GM12878 (cell line): ENCODE measurements at regions of chr6 and their contacts with region 1.

Region 1: DNA sequence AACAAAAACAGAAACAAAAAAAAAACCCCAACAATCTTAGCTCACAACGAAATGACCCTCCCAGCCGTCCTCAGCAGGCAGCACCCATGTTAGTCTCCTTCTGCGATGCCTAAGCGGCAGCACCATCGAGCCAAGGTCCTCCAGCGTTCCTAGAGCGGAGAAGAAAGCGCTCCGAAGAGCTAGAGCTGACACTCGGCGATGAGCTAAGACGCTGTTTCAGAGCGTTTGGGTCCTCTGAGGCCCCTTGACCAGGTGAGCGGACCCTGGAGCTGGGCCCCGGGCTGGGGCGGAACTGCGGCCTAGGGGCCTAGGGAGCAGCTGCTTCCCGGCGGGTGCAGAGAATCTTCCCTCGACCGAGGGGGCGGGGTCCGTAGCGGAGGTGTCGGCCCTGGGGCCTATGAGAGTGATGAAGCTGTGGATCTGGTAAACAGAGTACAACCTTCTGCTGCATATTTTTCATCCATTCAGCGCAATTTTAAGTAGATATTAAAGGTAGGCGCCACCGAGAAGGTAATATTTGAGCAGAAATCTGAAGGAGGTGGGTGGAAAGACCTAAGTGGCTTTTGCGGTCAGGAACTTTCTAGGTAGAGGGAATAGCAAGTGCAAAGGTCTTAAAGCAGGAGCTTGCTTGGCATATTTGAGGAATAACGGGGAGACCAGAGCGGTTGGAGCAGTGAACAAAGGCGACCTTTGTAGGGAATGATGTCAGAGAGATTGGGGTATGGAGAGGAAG is at the start of gene ZSCAN26:
- DNase-seq: peak; percentile 70
- ATAC-seq: peak; percentile 98
- H3K4me3 ChIP-seq: peak within 1 kb of the TSS; percentile 96
- H3K27ac ChIP-seq: peak within 1 kb of the TSS; percentile 84
- H3K4me1 ChIP-seq: no peaks in the 10 kb centered on the region
- H3K27me3 ChIP-seq: no peaks in the 10 kb centered on the region
- CTCF ChIP-seq: no peak
- EP300 ChIP-seq: no peak
- POLR2A ChIP-seq: peak; percentile 82
- RAD21 ChIP-seq: 0 out of 2 replicates have a peak, but pooled peaks have one; percentile 4
- polyA plus RNA-seq, gene ZSCAN26: 4.6 to 5.4 TPM

Region 2: GRCh38 chr6:28218271-28219248 is 48.6 kb before region 1 on chr6:
- CTCF ChIA-PET with region 1: no interaction called
- POLR2A ChIA-PET with region 1: interaction called, 7 read pairs
- RAD21 ChIA-PET with region 1: interaction called, 4 read pairs
- SMC1A ChIA-PET with region 1: interaction called, 13 read pairs
- in situ Hi-C with region 1: no loop called
- intact Hi-C with region 1: no loop called
- DNase-seq: no peak
- ATAC-seq: peak; percentile 97
- H3K4me3 ChIP-seq: peak overlapping the region; percentile 83
- H3K27ac ChIP-seq: no peak overlapping the region
- H3K4me1 ChIP-seq: peaks cover 3% of the 10 kb centered on the region; the same call in 1 of the 2 replicates
- H3K27me3 ChIP-seq: no peaks in the 10 kb centered on the region; a peak in 1 of 4 replicates
- CTCF ChIP-seq: no peak
- EP300 ChIP-seq: no peak
- POLR2A ChIP-seq: peak; percentile 67
- RAD21 ChIP-seq: no peak

Region 3: DNA sequence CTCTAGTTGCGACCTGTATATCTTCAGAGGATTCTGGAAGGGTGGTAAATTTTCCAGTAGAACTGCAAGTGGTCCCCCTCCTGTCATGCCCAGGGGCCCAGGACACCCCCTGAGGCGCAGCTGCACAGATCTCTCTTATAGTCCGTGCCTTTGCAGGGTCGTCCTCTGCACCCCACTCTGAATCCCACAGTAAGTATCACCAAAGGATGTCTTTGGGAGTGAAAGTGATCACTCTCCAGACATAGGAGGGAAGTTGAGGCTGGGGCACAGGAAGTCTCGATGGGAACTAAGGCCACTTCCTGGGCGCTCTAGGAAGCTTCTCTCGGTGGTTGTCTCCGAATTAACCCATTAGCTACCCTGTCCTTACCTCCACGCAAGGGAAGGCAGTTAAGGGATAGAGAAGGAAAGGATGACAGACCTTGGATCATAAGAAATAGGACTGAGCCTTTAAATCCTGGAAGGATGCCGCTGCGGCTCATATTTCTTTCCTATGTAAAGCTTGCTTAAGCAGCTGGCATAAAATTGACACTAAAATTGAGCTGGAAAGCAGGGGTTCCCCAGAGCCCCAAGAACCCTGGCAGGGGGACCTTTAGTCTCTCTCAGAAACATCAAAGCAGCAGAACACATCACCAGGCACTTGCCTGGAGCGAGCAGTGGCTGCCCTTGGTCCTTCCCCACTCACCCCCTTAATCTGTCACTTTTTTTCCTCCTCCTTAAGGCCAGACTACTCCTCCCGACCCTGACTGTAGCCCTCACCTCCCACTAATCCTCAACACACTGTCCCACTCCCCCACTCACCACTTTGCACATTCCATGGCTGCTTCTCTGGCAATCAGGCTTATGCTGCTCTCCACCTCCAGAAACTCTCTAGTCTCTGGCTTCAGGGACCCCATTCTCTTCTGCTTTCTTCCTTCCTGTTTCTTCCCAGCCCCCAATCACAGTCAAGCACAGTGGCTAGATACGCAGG is 14.8 kb before region 1 on chr6 and contains the start of gene ZKSCAN4:
- CTCF ChIA-PET with region 1: interaction called, 14 read pairs
- POLR2A ChIA-PET with region 1: interaction called, 5 read pairs
- RAD21 ChIA-PET with region 1: interaction called, 17 read pairs
- SMC1A ChIA-PET with region 1: interaction called, 30 read pairs
- in situ Hi-C with region 1: no loop called
- intact Hi-C with region 1: loop called (anchors 2 kb)
- DNase-seq: peak; percentile 67
- ATAC-seq: peak; percentile 93
- H3K4me3 ChIP-seq: peak within 1 kb of the TSS; percentile 99
- H3K27ac ChIP-seq: peak within 1 kb of the TSS; percentile 55
- H3K4me1 ChIP-seq: no peaks in the 10 kb centered on the region
- H3K27me3 ChIP-seq: no peaks in the 10 kb centered on the region
- CTCF ChIP-seq: no peak
- EP300 ChIP-seq: no peak
- POLR2A ChIP-seq: peak; percentile 52
- RAD21 ChIP-seq: peak; percentile 35
- polyA plus RNA-seq, gene ZKSCAN4: 3.0 to 3.3 TPM

Region 4: DNA sequence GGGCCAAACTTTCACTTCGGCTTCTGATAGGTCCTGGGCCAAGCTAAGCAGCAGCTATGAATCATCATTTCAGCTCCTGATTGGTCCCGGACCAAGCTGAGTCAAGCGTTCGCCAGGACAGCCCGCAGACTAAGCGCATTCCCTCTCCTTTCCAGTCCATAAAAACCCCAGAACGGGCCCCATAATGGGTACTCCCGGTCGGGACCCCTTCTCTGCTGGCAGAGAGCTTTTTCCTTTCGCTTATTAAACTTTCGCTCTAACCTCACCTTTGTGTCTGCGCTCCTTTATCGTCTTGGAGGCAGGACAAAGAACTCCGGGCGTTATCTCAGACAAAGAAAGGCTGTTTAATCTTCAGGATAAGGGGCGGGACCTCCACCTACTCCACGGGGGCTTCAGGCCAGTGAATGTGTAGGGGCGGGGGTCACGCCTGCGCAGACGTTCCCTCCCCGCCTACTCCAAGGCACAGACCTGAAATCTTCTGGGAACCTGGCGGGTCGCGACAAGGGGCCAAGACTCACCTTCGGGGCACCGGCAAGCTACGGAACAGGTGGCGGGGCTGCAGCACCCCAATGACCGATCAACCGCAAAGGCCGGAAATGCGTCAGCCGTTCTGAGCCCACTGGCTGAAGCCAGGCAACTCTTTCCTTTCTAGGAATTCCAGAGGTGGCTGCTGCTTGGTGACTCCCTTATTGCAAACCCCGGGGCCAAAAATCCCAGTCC is 68.6 kb after region 1 on chr6 and contains the start of gene ZSCAN31:
- CTCF ChIA-PET with region 1: interaction called, 4 read pairs
- POLR2A ChIA-PET with region 1: interaction called, 5 read pairs
- RAD21 ChIA-PET with region 1: interaction called, 7 read pairs
- SMC1A ChIA-PET with region 1: interaction called, 10 read pairs
- in situ Hi-C with region 1: no loop called
- intact Hi-C with region 1: loop called (anchors 5 kb)
- DNase-seq: peak; percentile 73
- ATAC-seq: peak; percentile 96
- H3K4me3 ChIP-seq: peak within 1 kb of the TSS; percentile 72
- H3K27ac ChIP-seq: peak within 1 kb of the TSS; percentile 97
- H3K4me1 ChIP-seq: peaks cover 14% of the 10 kb centered on the region
- H3K27me3 ChIP-seq: no peaks in the 10 kb centered on the region
- CTCF ChIP-seq: no peak
- EP300 ChIP-seq: no peak
- POLR2A ChIP-seq: peak; percentile 85
- RAD21 ChIP-seq: no peak
- polyA plus RNA-seq, gene ZSCAN31: 1.6 to 2.0 TPM

Region 5: DNA sequence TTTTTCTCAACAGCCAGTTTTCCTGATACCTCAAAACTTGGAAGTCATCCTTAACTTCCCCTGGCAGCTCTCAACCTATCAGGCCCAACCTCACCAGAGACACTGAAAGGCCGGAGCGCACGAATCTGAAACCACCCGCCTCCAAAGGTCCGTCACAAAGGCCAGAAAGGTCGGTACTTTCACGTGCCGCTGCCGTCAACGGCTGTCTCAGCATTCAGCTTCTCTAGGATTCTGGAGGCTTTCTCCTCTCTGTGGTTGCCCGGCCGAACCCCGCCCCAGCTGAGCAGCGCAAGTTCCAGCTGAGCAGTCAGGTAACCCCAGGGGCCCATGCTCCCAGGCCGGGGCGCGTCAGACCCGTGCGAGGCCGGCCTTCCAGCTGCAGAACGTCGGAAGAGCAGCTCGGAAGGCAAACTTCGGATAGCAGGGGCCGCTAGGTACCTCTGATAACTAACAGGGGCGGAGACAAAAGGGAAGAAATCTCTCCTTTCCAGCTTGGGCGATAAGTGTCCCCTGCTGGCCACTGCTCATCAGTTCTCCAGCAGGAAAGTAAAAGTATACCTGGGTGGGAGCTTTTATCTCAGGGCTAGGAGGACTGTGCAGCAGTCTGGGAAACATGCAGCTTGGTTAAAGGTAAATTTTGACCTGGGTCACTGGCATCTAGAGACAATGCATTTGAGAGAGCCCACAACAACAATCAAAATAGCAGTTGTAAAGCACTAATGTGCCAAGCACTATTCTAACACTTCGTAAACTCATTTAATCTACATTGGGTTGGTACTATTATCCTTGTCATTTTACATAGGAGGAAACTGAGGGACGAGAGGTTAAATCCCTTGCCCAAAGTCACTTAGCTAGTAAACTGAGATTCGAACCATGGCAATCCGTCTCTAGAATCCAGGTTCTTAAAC is 116.4 kb after region 1 on chr6:
- CTCF ChIA-PET with region 1: interaction called, 3 read pairs
- POLR2A ChIA-PET with region 1: no interaction called
- RAD21 ChIA-PET with region 1: interaction called, 10 read pairs
- SMC1A ChIA-PET with region 1: interaction called, 7 read pairs
- in situ Hi-C with region 1: no loop called
- intact Hi-C with region 1: no loop called
- DNase-seq: no peak
- ATAC-seq: peak; percentile 97
- H3K4me3 ChIP-seq: peak overlapping the region; percentile 38; the same call in 1 of the 2 replicates
- H3K27ac ChIP-seq: peak overlapping the region; percentile 50; the same call in 1 of the 2 replicates
- H3K4me1 ChIP-seq: no peaks in the 10 kb centered on the region
- H3K27me3 ChIP-seq: no peaks in the 10 kb centered on the region
- CTCF ChIP-seq: peak; percentile 41 to 47 (median 42); a peak in 5 of 6 replicates
- EP300 ChIP-seq: peak; percentile 72 to 74; a peak in 2 of 4 replicates
- POLR2A ChIP-seq: peak; percentile 66
- RAD21 ChIP-seq: peak; percentile 49

Region 6: DNA sequence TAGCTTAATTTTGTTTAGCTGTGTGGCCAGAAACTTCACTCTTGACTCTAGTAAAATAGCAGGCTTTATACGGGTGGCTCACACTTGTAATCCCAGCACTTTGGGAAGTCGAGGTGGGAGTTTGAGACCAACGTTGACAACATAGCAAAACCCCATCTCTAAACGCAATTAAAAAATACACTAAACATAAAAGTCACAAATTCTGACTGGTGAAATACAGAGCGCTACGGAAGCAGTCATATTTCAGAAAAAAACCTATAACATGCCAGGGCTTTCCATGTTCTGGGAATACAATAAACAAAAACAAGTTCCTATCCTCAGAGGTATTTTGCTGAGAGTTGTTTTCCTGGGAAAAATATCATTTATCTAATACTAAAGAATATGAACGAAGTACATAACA is 200.9 kb after region 1 on chr6:
- CTCF ChIA-PET with region 1: no interaction called
- POLR2A ChIA-PET with region 1: no interaction called
- RAD21 ChIA-PET with region 1: no interaction called
- SMC1A ChIA-PET with region 1: no interaction called
- in situ Hi-C with region 1: no loop called
- intact Hi-C with region 1: no loop called
- DNase-seq: no peak
- ATAC-seq: no peak
- H3K4me3 ChIP-seq: no peak overlapping the region
- H3K27ac ChIP-seq: no peak overlapping the region
- H3K4me1 ChIP-seq: no peaks in the 10 kb centered on the region
- H3K27me3 ChIP-seq: no peaks in the 10 kb centered on the region; a peak in 2 of 4 replicates
- CTCF ChIP-seq: no peak
- EP300 ChIP-seq: no peak
- POLR2A ChIP-seq: no peak
- RAD21 ChIP-seq: no peak